ENCODE measurements at regions of chr21 and their contacts with region 1.

Region 1: DNA sequence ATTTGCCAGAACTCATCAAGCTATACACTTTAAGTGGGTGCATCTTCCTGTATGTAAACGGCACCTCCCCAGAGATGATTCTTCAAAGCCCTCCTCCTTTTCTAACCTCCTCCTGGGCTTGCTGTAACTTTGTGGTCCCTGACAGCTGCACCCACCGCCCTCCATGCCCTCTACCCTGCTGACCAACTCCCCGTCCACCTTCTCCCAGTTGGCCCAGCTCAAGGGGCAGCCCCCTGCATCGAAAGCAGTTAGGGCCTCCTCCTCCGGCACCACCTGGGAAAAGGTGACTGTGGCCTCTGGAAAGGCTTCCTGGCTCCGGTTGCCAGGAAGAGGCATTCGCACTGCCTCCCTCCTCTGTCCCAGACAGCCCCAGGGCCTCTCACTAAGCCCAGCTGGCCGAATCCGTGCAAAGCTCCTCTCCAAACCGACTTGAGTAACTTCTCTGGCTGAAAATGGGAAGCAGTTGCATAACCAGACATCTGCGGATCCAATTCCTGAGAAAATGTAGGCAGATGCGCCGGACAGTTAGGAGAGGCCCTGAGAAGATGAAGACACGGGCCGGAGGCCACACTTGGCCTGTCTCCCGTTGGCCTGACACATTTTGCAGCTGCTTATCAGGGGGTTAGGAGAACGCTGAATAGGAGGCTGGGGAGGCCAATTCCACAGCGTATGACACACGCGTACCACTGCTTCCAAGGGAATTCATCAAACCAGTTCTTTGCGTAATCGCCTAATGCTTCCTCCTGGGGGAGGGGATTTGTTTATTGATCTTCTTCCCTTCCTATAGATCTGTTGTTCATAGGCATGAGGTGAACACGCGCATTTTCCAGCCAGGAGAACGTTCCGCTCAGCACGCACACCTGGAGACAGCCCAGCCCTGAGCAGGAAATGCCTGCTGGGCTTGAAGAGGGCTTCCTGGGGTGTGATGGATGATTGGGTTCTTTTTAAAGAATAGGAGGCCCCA is 48.7 kb upstream of the COL6A2 start:
- DNase-seq: peak; percentile 88
- ATAC-seq: peak; percentile 96

Region 2: GRCh38 chr21:45836694-45837670 is 212.2 kb before region 1 on chr21:
- intact Hi-C with region 1: no loop called
- DNase-seq: no peak
- ATAC-seq: no peak

Region 3: DNA sequence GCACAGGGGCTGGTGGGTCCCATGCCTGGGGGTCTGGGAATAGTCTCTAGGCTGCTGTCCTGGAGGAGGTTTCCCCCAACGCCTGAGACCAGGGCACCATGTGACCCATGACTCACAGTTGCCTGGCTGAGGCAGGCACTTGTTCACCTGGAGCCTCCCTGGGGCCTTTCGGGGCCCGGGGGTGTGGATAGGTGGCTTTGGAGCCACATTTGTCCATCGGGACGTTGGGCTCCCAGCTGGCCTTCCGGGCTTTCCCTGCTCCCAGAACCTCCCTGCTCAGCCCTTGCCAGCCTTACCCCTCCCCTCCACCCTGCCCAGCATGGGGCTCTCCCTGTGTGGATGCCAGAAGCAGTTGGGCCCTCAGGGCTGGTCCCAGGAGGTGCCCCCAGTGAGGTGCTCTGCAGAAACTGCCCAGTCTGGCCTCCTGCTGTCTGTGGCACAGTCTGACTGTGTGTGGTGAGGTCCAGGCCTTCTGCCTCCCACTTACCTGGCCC is 53.5 kb before region 1 on chr21:
- intact Hi-C with region 1: loop called (anchors 10 kb)
- DNase-seq: peak; percentile 62
- ATAC-seq: no peak

Measured in sciatic nerve (tissue), 2 donors.